Vagina (tissue), 2 donors: ENCODE measurements at regions of chr16 and their contacts with region 1.

Region 1: GRCh38 chr16:19138601-19139000 is 24.8 kb downstream of the ITPRIPL2 start:
- DNase-seq: peak in 1 of 2 donors; percentile 93
- H3K4me3 ChIP-seq: no peak overlapping the region
- H3K27ac ChIP-seq: peak overlapping the region; percentile 63
- H3K4me1 ChIP-seq: peaks cover 46% of the 10 kb centered on the region
- H3K27me3 ChIP-seq: no peaks in the 10 kb centered on the region
- CTCF ChIP-seq: no peak
- POLR2A ChIP-seq: no peak

Region 2: DNA sequence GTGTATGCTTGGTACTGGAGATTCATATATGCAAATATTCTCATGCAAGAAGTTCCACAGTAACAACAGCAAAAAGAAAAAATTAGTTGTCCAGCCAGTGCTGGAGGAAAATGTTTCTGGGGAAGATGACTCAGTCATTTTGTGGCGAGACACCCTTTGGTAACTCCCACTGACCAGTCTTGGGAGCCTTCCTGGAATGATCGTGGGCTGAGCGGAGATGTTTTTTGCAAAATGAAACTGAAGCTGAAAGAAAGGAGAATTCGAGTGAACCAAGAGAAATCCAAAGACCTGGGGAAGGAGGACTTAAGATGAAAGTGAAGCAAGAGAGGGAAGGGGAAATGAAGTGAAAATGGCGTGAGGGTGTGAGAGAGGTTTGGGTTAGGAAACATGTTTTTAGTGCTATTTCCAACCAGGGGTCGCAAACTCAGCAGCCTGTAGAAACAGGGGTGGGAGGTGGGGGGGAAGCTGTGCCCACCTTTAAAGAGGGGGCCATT is 19.6 kb before region 1 on chr16:
- intact Hi-C with region 1: loop called (anchors 2 kb)
- DNase-seq: no peak
- H3K4me3 ChIP-seq: peak overlapping the region; percentile 25 to 34
- H3K27ac ChIP-seq: peak overlapping the region; percentile 94
- H3K4me1 ChIP-seq: peaks cover 88% of the 10 kb centered on the region
- H3K27me3 ChIP-seq: no peaks in the 10 kb centered on the region
- CTCF ChIP-seq: no peak
- POLR2A ChIP-seq: no peak

Region 3: GRCh38 chr16:19179546-19180490 is 41.2 kb after region 1 on chr16:
- intact Hi-C with region 1: loop called (anchors 1 kb)
- DNase-seq: no peak
- H3K4me3 ChIP-seq: no peak overlapping the region
- H3K27ac ChIP-seq: no peak overlapping the region
- H3K4me1 ChIP-seq: peaks cover 8% of the 10 kb centered on the region
- H3K27me3 ChIP-seq: no peaks in the 10 kb centered on the region
- CTCF ChIP-seq: peak in 2 of 3 experiments; percentile 66 to 68
- POLR2A ChIP-seq: no peak

Region 4: DNA sequence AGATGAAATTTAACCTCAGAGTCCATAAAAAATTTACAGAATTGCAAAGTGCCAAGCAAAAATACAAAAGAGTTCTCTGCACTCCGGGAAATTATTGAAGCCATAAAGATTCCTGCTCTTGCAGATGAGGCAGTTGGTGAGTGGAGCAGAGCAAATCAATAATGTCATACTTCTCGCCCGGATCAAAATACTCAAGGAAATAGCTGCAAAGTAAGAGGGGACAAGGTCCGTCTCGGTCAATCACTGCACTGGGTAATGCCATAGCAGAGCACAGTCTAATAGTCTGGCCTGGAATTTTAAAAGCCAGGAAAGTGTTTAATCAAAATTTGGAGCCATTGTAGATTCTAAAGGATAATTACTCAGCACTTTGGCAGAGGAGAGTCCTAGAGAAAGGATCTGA is 1129.8 kb after region 1 on chr16:
- intact Hi-C with region 1: no loop called
- DNase-seq: no peak
- H3K4me3 ChIP-seq: no peak overlapping the region
- H3K27ac ChIP-seq: no peak overlapping the region
- H3K4me1 ChIP-seq: no peaks in the 10 kb centered on the region
- H3K27me3 ChIP-seq: no peaks in the 10 kb centered on the region
- CTCF ChIP-seq: no peak
- POLR2A ChIP-seq: no peak